Left lung (tissue), 14 donors: ENCODE measurements at regions of chr10 and their contacts with region 1.

Region 1: GRCh38 chr10:92573798-92574547 is at the start of gene IDE:
- DNase-seq: peak; percentile 83 to 97 (median 91)
- ATAC-seq: peak; percentile 94
- H3K4me3 ChIP-seq: peak within 1 kb of the TSS; percentile 91 to 92
- H3K27ac ChIP-seq: peak within 1 kb of the TSS; percentile 95 to 96
- H3K4me1 ChIP-seq: peaks cover 4 to 39% of the 10 kb centered on the region in 2 donors
- H3K27me3 ChIP-seq: no peaks in the 10 kb centered on the region
- CTCF ChIP-seq: peak in 1 of 2 donors; percentile 78
- polyA plus RNA-seq, gene IDE: 19.2 to 24.9 (median 21.6) TPM

Region 2: DNA sequence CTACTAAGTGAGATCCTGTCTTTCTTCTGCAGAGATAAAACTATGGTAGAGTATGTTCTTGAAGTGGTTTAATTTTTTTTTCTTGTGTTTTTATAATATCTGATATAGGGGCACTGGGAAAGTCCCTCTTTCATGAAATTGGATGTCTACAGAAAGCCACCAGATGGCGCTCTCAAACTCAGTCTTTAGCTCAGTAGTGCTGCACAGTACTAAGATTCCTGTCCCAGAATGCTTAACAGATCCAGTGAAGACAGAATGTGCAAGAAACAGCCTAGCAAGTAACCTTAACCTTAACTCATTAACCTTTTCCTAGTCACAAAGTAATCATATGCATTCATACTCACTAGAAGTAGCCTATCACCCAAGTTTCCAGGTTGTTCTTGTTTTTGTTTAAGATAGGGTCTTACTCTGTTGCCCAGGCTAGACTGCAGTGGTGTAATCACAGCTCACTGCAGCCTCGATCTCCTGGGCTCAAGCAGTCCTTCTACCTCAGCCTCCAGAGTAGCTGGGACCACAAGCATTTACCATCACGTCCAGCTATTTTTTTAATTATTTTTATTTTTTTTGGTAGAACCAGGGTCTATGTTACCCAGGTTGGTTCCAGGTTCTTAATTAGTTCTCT is 56.8 kb before region 1 on chr10:
- intact Hi-C with region 1: loop called in 1 of 2 experiments (anchors 5 kb)
- DNase-seq: peak in 3 of 4 donors; percentile 44 to 82 (median 62)
- ATAC-seq: peak; percentile 96
- H3K4me3 ChIP-seq: no peak overlapping the region
- H3K27ac ChIP-seq: no peak overlapping the region
- H3K4me1 ChIP-seq: no peaks in the 10 kb centered on the region
- H3K27me3 ChIP-seq: no peaks in the 10 kb centered on the region
- CTCF ChIP-seq: peak; percentile 66 to 80